ENCODE measurements at regions of chr6 and their contacts with region 1.

Region 1: DNA sequence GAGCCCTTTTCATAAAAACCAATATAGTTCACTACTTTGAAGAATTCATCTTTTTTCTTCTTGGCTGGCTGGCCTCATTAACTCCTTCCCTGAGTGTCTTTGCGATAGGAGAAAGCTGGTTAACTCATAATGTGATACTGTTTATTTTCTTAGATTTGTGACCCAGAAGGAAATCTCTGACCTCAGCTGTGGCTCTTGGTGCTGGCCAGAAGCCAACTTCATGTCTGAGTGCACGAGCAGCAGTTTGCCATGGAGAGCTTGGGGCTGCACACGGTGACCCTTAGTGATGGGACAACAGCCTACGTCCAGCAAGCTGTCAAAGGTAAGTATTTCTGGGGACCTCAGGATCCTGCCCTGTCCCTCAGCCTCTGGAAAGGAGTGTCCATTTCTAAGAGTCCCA is 16.7 kb upstream of the DEF6 start:
- DNase-seq: no peak
- H3K4me3 ChIP-seq: no peak overlapping the region
- H3K27ac ChIP-seq: no peak overlapping the region
- H3K4me1 ChIP-seq: no peaks in the 10 kb centered on the region
- H3K27me3 ChIP-seq: no peaks in the 10 kb centered on the region
- CTCF ChIP-seq: no peak

Region 2: DNA sequence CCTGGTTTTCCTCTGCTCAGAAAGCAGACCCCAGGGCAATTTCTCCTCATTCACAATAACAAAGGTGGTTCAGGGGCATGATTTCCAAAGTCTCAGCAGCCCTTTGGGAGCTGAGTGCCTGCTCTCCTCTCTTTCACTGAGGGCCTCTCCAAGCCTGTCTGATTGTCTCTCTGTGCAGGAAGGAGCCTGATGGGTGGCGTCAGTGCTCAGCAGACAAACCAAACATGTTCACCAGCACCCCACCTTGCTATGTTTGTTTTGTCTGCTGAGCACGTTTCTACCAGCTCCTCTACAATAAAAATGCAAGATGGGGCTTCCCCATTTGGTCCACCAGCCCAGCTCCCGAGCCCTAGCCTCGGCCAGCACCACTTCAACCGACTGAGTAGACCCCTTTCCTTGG is 114.4 kb before region 1 on chr6:
- CTCF ChIA-PET with region 1: no interaction called
- POLR2A ChIA-PET with region 1: interaction called, 28 read pairs
- intact Hi-C with region 1: no loop called
- DNase-seq: no peak
- H3K4me3 ChIP-seq: no peak overlapping the region
- H3K27ac ChIP-seq: peak overlapping the region; percentile 84
- H3K4me1 ChIP-seq: peaks cover 28% of the 10 kb centered on the region
- H3K27me3 ChIP-seq: no peaks in the 10 kb centered on the region
- CTCF ChIP-seq: no peak

Region 3: GRCh38 chr6:36968266-36968977 is 1687.5 kb after region 1 on chr6:
- CTCF ChIA-PET with region 1: no interaction called
- POLR2A ChIA-PET with region 1: no interaction called
- intact Hi-C with region 1: no loop called
- DNase-seq: no peak
- H3K4me3 ChIP-seq: no peak overlapping the region
- H3K27ac ChIP-seq: no peak overlapping the region
- H3K4me1 ChIP-seq: no peaks in the 10 kb centered on the region
- H3K27me3 ChIP-seq: no peaks in the 10 kb centered on the region
- CTCF ChIP-seq: no peak

Measured in PC-9 (cell line).